ENCODE measurements at regions of chr5 and their contacts with region 1.

Region 1: GRCh38 chr5:38922199-38922598 is 76.4 kb downstream of the OSMR start:
- DNase-seq: peak; percentile 62 to 75
- H3K4me3 ChIP-seq: no peak overlapping the region
- H3K27ac ChIP-seq: no peak overlapping the region
- H3K4me1 ChIP-seq: no peaks in the 10 kb centered on the region
- H3K27me3 ChIP-seq: no peaks in the 10 kb centered on the region
- CTCF ChIP-seq: peak; percentile 98

Region 2: DNA sequence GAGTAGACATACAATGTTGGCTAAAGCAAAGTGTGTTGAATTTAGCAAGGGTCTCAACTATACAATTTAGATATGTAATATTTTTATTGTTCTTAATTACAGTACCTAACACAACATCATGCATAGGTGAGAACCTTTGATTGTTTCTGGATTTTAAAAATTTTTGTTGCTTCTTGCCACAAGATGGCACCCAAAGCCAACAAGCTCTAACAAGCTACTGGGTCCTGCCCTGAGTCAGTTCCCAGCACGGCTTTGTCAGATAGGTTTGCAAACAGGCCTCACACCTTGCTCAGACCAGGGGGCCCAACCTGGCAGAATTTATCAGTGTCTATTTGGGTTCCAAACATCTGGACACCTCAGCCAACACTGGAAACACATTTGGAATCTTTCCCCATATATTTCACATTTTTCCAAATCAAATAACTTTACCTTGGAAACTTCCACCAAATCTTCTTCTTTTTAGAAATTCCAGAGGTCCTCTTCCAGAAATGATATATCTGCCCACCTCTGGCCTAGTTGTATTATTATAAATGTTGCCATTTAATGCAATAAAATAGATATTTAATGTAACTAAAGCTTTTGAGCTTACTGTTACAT is 713.3 kb before region 1 on chr5:
- CTCF ChIA-PET with region 1: no interaction called
- POLR2A ChIA-PET with region 1: no interaction called
- intact Hi-C with region 1: loop called (anchors 2 kb)
- DNase-seq: peak; percentile 32 to 34
- H3K4me3 ChIP-seq: no peak overlapping the region
- H3K27ac ChIP-seq: no peak overlapping the region
- H3K4me1 ChIP-seq: no peaks in the 10 kb centered on the region
- H3K27me3 ChIP-seq: 0 out of 2 replicates have a peak, but pooled peaks cover 7% of the 10 kb centered on the region
- CTCF ChIP-seq: peak; percentile 63

Region 3: GRCh38 chr5:38382898-38383297 is 539.3 kb before region 1 on chr5:
- CTCF ChIA-PET with region 1: no interaction called
- POLR2A ChIA-PET with region 1: no interaction called
- intact Hi-C with region 1: loop called (anchors 2 kb)
- DNase-seq: peak; percentile 58 to 77
- H3K4me3 ChIP-seq: no peak overlapping the region
- H3K27ac ChIP-seq: no peak overlapping the region
- H3K4me1 ChIP-seq: no peaks in the 10 kb centered on the region
- H3K27me3 ChIP-seq: peaks cover 37% of the 10 kb centered on the region
- CTCF ChIP-seq: peak; percentile 88

Region 4: DNA sequence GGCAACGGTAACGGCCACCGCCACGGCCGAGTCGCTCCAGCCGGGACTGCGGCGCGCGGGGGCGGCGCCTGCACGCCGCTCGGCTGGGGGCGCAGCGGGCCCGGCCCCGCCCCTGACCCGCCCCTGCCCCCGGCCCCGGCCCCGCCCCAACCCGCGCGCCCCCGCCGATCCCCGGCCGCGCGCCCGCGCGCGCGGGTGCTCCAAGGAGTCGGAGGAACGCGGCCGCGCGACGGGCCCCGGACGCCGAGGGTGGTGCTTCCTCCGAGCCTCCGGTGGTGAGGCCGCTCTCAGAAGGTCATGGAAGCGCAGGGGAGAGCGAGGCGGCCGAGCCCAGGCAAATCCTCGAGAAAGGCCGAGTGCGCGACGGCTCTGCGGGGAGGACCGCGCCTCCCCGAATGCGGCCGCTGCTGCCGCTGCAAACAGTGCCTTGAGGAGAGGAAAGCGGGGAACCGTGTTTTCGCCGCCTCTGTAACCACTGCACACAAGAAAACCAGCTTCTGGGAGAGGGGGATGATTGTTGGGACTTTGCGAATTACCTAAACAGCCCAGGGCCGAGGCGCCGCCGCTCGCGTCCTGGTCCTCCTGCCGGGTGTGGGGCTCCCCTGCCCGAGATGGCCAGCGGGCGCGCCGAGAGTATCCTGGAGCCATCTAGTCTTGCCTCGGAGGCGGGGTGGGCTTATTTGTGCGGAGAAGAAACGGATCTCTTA is 365.4 kb before region 1 on chr5 and contains the start of gene LIFR:
- CTCF ChIA-PET with region 1: no interaction called
- POLR2A ChIA-PET with region 1: no interaction called
- intact Hi-C with region 1: loop called (anchors 1 kb)
- DNase-seq: peak; percentile 53 to 95
- H3K4me3 ChIP-seq: peak within 1 kb of the TSS; percentile 97
- H3K27ac ChIP-seq: peak within 1 kb of the TSS; percentile 58
- H3K4me1 ChIP-seq: peaks cover 10% of the 10 kb centered on the region; the same call in 1 of the 2 replicates
- H3K27me3 ChIP-seq: 0 out of 2 replicates have a peak, but pooled peaks cover 15% of the 10 kb centered on the region
- CTCF ChIP-seq: no peak
- total RNA-seq, gene LIFR: 22.0 and 28.6 TPM in 2 replicates

Region 5: GRCh38 chr5:38831909-38832308 is 90.3 kb before region 1 on chr5:
- CTCF ChIA-PET with region 1: interaction called, 3 read pairs
- POLR2A ChIA-PET with region 1: no interaction called
- intact Hi-C with region 1: loop called (anchors 1 kb)
- DNase-seq: no peak
- H3K4me3 ChIP-seq: no peak overlapping the region
- H3K27ac ChIP-seq: no peak overlapping the region
- H3K4me1 ChIP-seq: peaks cover 18% of the 10 kb centered on the region
- H3K27me3 ChIP-seq: no peaks in the 10 kb centered on the region
- CTCF ChIP-seq: peak; percentile 75

Region 6: GRCh38 chr5:40124367-40124766 is 1202.2 kb after region 1 on chr5:
- CTCF ChIA-PET with region 1: no interaction called
- POLR2A ChIA-PET with region 1: no interaction called
- intact Hi-C with region 1: no loop called
- DNase-seq: no peak
- H3K4me3 ChIP-seq: no peak overlapping the region
- H3K27ac ChIP-seq: no peak overlapping the region
- H3K4me1 ChIP-seq: no peaks in the 10 kb centered on the region
- H3K27me3 ChIP-seq: no peaks in the 10 kb centered on the region
- CTCF ChIP-seq: no peak